MCF 10A (cell line): ENCODE measurements at regions of chr20 and their contacts with region 1.

Region 1: DNA sequence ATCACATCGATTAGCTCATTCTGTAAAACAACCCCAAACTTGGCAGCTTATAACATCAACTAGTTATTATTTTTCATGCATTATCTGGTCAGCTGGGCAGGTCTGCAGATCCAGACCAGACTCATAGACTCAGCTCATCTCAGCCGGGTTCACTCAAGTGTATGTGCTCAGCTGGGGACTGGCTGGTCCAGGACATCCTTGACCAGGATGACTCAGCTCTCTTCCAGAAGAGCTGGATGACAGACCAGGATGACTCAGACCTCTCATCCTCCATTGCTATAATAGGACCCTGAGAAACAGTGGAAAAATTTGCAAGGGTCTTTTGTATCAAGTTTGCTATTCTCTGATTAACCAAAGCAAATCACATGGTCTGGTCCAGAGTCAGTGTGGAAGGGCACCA is 312.5 kb upstream of the PLCB4 start:
- DNase-seq: peak; percentile 76
- H3K4me3 Mint-ChIP-seq: no peak overlapping the region
- H3K27ac Mint-ChIP-seq: no peak overlapping the region
- H3K4me1 Mint-ChIP-seq: peaks cover 17% of the 10 kb centered on the region
- H3K27me3 Mint-ChIP-seq: no peaks in the 10 kb centered on the region
- CTCF ChIP-seq: no peak

Region 2: DNA sequence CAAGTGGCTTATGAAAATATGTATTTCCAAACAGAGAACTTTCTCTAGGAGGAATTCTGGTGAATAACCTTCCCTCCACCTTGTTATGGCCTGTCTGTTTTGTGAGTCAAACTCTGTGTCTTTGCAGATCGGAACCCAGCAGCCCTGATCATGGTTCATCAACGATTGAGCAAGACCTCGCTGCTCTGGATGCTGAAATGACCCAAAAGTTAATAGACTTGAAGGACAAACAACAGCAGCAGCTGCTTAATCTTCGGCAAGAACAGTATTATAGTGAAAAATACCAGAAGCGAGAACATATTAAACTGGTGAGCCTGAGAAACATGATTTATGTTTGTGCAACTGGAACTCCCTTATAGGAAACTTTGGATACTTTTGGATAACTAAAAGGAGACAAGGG is 18.0 kb after region 1 on chr20:
- CTCF ChIA-PET with region 1: interaction called, 36 read pairs
- POLR2A ChIA-PET with region 1: interaction called, 3 read pairs
- intact Hi-C with region 1: no loop called
- DNase-seq: no peak
- H3K4me3 Mint-ChIP-seq: no peak overlapping the region
- H3K27ac Mint-ChIP-seq: no peak overlapping the region
- H3K4me1 Mint-ChIP-seq: no peaks in the 10 kb centered on the region
- H3K27me3 Mint-ChIP-seq: no peaks in the 10 kb centered on the region
- CTCF ChIP-seq: no peak

Region 3: GRCh38 chr20:8782804-8783203 is 26.4 kb after region 1 on chr20:
- CTCF ChIA-PET with region 1: interaction called, 27 read pairs
- POLR2A ChIA-PET with region 1: no interaction called
- intact Hi-C with region 1: no loop called
- DNase-seq: no peak
- H3K4me3 Mint-ChIP-seq: no peak overlapping the region
- H3K27ac Mint-ChIP-seq: peak overlapping the region; percentile 51
- H3K4me1 Mint-ChIP-seq: no peaks in the 10 kb centered on the region
- H3K27me3 Mint-ChIP-seq: no peaks in the 10 kb centered on the region
- CTCF ChIP-seq: no peak

Region 4: GRCh38 chr20:8790442-8791074 is 34.1 kb after region 1 on chr20:
- CTCF ChIA-PET with region 1: interaction called, 24 read pairs
- POLR2A ChIA-PET with region 1: interaction called, 4 read pairs
- intact Hi-C with region 1: loop called (anchors 2 kb)
- DNase-seq: peak; percentile 69
- H3K4me3 Mint-ChIP-seq: no peak overlapping the region
- H3K27ac Mint-ChIP-seq: no peak overlapping the region
- H3K4me1 Mint-ChIP-seq: no peaks in the 10 kb centered on the region
- H3K27me3 Mint-ChIP-seq: peaks cover 26% of the 10 kb centered on the region
- CTCF ChIP-seq: peak; percentile 95

Region 5: DNA sequence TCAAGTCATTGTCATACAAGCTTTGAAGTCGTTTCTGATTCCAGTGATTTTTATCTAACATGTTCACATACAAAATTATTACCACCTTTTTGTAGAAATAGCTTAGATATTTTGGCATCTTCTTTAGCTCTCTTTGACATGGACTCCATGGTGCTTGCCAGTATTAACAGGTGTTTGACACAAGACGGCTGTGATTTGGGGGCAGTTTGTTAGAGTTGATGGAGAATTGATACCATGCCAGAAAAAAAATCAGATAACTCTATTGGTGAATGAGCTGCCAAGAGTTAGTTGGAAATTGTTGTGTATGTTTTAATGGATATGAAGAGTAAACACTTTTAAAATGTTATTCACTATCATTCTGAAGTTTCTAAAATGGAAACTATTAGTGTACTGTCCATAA is 611.3 kb after region 1 on chr20:
- CTCF ChIA-PET with region 1: interaction called, 16 read pairs
- POLR2A ChIA-PET with region 1: no interaction called
- intact Hi-C with region 1: no loop called
- DNase-seq: no peak
- H3K4me3 Mint-ChIP-seq: no peak overlapping the region
- H3K27ac Mint-ChIP-seq: no peak overlapping the region
- H3K4me1 Mint-ChIP-seq: no peaks in the 10 kb centered on the region
- H3K27me3 Mint-ChIP-seq: no peaks in the 10 kb centered on the region
- CTCF ChIP-seq: no peak